SK-N-SH (cell line): ENCODE measurements at regions of chr19 and their contacts with region 1.

Region 1: GRCh38 chr19:54029930-54030490 is 33.7 kb downstream of the VSTM1 start:
- DNase-seq: peak; percentile 71
- H3K4me3 ChIP-seq: no peak overlapping the region; a peak in 1 of 4 replicates
- H3K27ac ChIP-seq: no peak overlapping the region
- H3K4me1 ChIP-seq: no peaks in the 10 kb centered on the region
- H3K27me3 ChIP-seq: no peaks in the 10 kb centered on the region
- CTCF ChIP-seq: peak; percentile 69
- EP300 ChIP-seq: no peak
- RAD21 ChIP-seq: peak; percentile 81

Region 2: DNA sequence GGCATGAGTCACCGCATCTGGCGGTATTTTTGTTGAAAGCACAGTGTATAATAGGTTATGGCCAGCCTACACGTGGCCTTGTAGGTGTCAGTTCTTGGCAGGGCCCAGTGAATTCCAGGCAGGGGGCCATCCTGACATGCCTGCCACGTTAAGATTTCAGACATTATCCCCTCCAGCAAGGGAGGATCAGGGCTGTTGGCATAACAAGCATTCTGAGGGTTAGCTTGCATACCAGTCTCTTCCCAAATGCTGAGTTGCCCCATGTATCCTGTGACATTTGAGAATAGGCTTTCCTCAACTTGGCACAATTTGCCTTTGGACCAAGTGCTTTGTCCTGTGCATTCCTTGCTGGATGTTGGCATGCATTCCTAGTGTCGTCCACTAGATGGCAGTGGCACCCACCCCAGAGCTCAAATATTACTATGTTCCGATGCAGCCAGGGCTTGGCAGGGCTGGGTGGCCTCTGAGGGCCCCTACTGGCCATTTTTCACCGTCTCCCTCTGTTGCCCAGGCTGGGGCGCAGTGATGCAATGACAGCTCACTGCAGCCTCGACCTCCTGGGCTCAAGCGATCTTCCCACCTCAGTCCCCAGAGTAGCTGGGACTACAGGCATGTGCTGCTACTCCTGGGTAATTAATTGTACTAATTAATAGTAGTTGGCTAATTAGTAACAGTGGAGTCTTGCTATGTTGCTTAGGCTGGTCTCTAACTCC is 237.1 kb before region 1 on chr19:
- CTCF ChIA-PET with region 1: interaction called, 44 read pairs
- POLR2A ChIA-PET with region 1: no interaction called
- DNase-seq: peak; percentile 90
- H3K4me3 ChIP-seq: no peak overlapping the region; a peak in 1 of 4 replicates
- H3K27ac ChIP-seq: no peak overlapping the region
- H3K4me1 ChIP-seq: no peaks in the 10 kb centered on the region
- H3K27me3 ChIP-seq: peaks cover 38% of the 10 kb centered on the region
- CTCF ChIP-seq: peak; percentile 99
- EP300 ChIP-seq: no peak
- RAD21 ChIP-seq: peak; percentile 77

Region 3: GRCh38 chr19:53819861-53820260 is 210.1 kb before region 1 on chr19:
- CTCF ChIA-PET with region 1: interaction called, 11 read pairs
- POLR2A ChIA-PET with region 1: no interaction called
- DNase-seq: no peak
- H3K4me3 ChIP-seq: no peak overlapping the region
- H3K27ac ChIP-seq: no peak overlapping the region
- H3K4me1 ChIP-seq: no peaks in the 10 kb centered on the region
- H3K27me3 ChIP-seq: peaks cover 20% of the 10 kb centered on the region; the same call in 1 of the 2 replicates
- CTCF ChIP-seq: no peak
- EP300 ChIP-seq: no peak
- RAD21 ChIP-seq: no peak

Region 4: DNA sequence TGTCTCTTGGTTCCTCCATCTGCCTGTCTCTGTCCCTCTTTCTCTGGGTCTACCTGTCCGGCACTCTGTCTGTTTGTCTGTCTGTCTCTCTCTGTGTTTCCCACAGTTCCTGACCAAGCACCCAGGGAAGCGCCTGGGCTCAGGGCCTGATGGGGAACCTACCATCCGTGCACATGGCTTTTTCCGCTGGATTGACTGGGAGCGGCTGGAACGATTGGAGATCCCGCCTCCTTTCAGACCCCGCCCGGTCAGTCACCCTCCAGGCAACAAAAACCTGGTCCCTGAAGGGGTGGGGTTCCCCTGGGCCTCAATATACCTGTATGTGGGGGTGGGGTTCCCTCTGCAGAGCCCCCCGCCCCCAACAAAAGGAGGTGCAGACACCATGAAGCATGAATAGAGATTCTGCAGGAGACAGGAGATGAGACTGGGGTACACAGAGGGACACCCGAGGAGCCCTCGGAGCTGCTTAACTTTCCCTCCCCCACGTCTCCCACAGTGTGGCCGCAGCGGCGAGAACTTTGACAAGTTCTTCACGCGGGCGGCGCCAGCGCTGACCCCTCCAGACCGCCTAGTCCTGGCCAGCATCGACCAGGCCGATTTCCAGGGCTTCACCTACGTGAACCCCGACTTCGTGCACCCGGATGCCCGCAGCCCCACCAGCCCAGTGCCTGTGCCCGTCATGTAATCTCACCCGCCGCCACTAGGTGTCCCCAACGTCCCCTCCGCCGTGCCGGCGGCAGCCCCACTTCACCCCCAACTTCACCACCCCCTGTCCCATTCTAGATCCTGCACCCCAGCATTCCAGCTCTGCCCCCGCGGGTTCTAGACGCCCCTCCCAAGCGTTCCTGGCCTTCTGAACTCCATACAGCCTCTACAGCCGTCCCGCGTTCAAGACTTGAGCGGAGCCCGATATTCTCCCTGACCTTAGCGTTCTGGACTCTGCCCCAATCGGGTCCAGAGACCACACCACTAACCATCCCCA is 123.5 kb before region 1 on chr19:
- CTCF ChIA-PET with region 1: interaction called, 47 read pairs
- POLR2A ChIA-PET with region 1: no interaction called
- DNase-seq: peak; percentile 85
- H3K4me3 ChIP-seq: peak overlapping the region; percentile 17 to 26; a peak in 2 of 4 replicates
- H3K27ac ChIP-seq: no peak overlapping the region
- H3K4me1 ChIP-seq: peaks cover 0 to 20% of the 10 kb centered on the region in 2 experiments; a peak in 1 of 4 replicates
- H3K27me3 ChIP-seq: peaks cover 26% of the 10 kb centered on the region
- CTCF ChIP-seq: peak; percentile 85
- EP300 ChIP-seq: no peak
- RAD21 ChIP-seq: peak; percentile 73

Region 5: DNA sequence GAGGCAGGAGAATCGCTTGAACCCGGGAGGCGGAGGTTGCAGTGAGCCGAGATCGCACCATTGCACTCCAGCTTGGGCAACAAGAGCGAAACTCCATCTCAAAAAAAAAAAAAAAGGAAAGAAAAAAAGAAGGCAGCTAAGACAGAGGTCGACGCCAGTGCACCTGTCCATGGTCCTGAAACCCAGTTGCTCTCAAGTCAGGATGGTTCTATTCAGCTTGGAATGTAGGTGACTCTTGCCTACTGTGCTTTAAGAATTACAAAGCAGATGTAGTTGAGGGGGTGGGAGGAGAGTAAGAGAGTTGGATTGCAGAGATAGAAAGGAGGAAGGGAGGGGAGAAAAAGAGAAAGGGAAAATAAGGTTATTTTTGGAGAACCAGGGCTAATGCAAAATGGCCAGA is 102.3 kb before region 1 on chr19:
- CTCF ChIA-PET with region 1: no interaction called
- POLR2A ChIA-PET with region 1: no interaction called
- DNase-seq: no peak
- H3K4me3 ChIP-seq: no peak overlapping the region
- H3K27ac ChIP-seq: no peak overlapping the region
- H3K4me1 ChIP-seq: no peaks in the 10 kb centered on the region
- H3K27me3 ChIP-seq: no peaks in the 10 kb centered on the region
- CTCF ChIP-seq: no peak
- EP300 ChIP-seq: no peak
- RAD21 ChIP-seq: no peak

Region 6: GRCh38 chr19:54041969-54042606 is 12.1 kb after region 1 on chr19:
- CTCF ChIA-PET with region 1: interaction called, 30 read pairs
- POLR2A ChIA-PET with region 1: no interaction called
- DNase-seq: no peak
- H3K4me3 ChIP-seq: no peak overlapping the region
- H3K27ac ChIP-seq: no peak overlapping the region
- H3K4me1 ChIP-seq: no peaks in the 10 kb centered on the region
- H3K27me3 ChIP-seq: peaks cover 19% of the 10 kb centered on the region; the same call in 1 of the 2 replicates
- CTCF ChIP-seq: no peak
- EP300 ChIP-seq: no peak
- RAD21 ChIP-seq: no peak